ENCODE measurements at regions of chr3 and their contacts with region 1.

Region 1: DNA sequence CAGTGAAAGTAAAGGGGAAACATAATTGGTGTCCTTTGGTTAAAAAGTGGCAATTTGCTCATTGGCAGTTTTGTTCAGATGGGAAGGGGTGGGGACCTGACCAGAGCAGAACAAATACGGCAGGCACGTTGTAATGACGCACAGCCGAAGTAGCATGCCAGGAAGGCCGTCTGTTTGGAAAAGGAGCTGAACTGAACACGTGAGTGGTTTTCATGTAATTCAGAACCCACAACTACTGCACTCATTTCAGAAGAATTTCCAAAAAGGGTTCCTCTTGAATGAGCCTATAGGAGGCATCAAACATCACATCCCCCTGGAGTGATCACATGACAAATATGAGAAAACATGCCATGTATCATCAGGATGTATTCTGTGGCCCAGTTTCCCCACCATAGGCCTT is 42.9 kb upstream of the LMCD1 start:
- DNase-seq: peak; percentile 98
- H3K4me3 ChIP-seq: no peak overlapping the region
- CTCF ChIP-seq: no peak

Region 2: GRCh38 chr3:8482960-8483665 is 24.4 kb after region 1 on chr3:
- CTCF ChIA-PET with region 1: interaction called, 3 read pairs
- POLR2A ChIA-PET with region 1: interaction called, 11 read pairs
- DNase-seq: peak; percentile 96
- H3K4me3 ChIP-seq: no peak overlapping the region
- CTCF ChIP-seq: no peak

Measured in AG04449 (cell line).